Activated CD4-positive, alpha-beta T cell treated with anti-CD3 and anti-CD28 coated beads, Interleukin-2, amount 10 ng/mL, durations not matched to agents 24 days and 14 days (primary cell): ENCODE measurements at regions of chr2 and their contacts with region 1.

Region 1: DNA sequence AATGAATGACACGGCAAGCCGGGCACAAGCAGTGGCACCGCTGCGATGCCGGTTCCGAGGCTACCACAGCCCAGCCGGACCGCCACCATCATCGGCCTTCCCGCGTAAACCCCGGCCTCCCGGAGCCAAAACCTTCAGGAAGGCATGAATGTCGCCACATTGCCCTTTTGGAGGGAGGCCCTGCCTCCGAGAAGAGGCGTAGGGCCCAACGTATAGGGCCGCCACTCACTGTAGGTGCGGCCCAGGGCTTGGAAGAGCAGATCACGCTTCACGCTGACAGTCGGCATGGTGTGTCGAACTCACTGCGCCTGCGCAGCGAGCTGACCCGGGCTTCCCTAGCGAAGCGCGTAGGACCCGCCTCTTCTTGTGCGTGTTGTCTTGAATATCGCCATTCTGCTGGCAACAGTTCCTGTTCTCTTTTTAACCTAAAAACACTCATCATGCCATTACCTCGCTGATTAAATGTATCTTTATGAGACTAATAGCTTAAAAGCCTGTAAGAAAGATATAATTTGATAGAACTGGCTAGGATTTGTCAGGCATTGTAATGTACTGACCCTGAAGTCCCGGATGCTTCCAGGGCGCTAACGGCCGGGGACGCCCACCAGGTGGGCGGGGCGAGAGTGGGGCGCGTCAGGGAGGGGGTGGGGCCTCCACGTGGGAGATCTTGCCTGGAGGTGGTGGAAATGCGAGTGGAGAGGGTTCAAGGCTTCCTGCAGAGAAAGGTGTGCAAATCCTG is at the start of gene FARSB:
- DNase-seq: peak; percentile 98
- H3K4me3 Mint-ChIP-seq: peak within 1 kb of the TSS; percentile 100
- H3K27ac Mint-ChIP-seq: peak within 1 kb of the TSS; percentile 98
- H3K4me1 Mint-ChIP-seq: peaks cover 32% of the 10 kb centered on the region
- H3K27me3 Mint-ChIP-seq: peaks cover 2% of the 10 kb centered on the region
- total RNA-seq, gene FARSB: 57.4 and 58.5 TPM in 2 replicates

Region 2: DNA sequence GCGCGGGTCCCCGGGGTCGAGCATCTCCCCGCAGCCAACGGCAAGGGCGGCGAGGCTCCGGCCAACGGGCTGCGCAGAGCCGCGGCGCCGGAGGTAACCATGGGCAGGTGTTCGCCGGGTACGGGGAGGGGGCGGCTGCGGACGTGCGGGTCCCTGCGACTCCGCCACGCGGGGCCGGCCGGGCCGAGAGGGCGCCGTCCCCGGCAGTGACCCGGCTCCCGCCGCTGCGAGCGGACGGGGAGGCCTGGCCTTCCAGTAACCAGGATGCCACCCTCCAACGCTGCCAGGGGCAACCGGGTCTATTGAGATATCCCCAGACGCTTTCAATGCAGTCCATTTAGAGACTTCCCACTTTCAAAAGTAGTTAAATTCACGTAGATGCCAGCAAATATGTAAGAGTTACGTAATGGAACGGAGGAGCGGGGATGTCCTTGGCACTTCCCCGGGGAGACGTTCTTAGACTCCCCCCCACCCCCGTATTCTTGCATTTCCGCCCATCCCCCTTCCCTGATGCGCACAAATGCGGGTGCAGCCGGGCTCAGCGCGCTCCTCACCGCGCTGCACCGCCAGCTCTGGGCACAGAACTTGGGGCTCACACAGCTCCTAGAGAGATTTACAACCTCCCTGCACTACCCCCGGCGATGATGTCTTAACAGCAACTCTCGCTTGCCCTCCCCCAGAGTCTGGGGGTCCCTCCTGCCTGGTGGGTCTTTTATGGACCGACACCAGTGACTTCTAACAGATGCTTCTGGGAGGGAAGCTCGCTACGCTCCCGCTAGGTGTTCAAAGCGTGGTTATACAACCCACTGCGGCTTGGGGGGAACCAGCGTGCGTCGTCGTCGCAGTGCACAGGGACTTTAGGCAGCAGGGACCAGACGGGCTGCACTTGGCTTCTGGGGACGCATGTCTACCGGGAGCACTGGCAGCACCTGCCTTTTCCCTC is 231.0 kb before region 1 on chr2:
- intact Hi-C with region 1: loop called (anchors 2 kb)
- DNase-seq: peak; percentile 76
- H3K4me3 Mint-ChIP-seq: peak overlapping the region; percentile 84
- H3K27ac Mint-ChIP-seq: peak overlapping the region; percentile 84
- H3K4me1 Mint-ChIP-seq: peaks cover 48% of the 10 kb centered on the region
- H3K27me3 Mint-ChIP-seq: peaks cover 24% of the 10 kb centered on the region

Region 3: GRCh38 chr2:222939208-222939856 is 283.4 kb after region 1 on chr2:
- intact Hi-C with region 1: no loop called
- DNase-seq: peak; percentile 91
- H3K4me3 Mint-ChIP-seq: no peak overlapping the region
- H3K27ac Mint-ChIP-seq: no peak overlapping the region
- H3K4me1 Mint-ChIP-seq: peaks cover 2% of the 10 kb centered on the region
- H3K27me3 Mint-ChIP-seq: no peaks in the 10 kb centered on the region